ENCODE measurements at regions of chr11 and their contacts with region 1.

Region 1: GRCh38 chr11:118928108-118928870 is 2.6 kb upstream of the BCL9L start:
- DNase-seq: peak; percentile 98
- ATAC-seq: peak; percentile 67 to 71
- H3K4me3 ChIP-seq: peak overlapping the region; percentile 60 to 100 (median 82)
- H3K27ac ChIP-seq: peak overlapping the region; percentile 89 to 100 (median 96)
- H3K4me1 ChIP-seq: peaks cover 34 to 55% of the 10 kb centered on the region in 2 donors
- H3K27me3 ChIP-seq: no peaks in the 10 kb centered on the region
- CTCF ChIP-seq: peak; percentile 95 to 98 (median 97)
- POLR2A ChIP-seq: peak; percentile 60 to 73

Region 2: GRCh38 chr11:118448294-118448693 is 480.0 kb before region 1 on chr11:
- in situ Hi-C with region 1: no loop called
- intact Hi-C with region 1: no loop called
- DNase-seq: no peak
- ATAC-seq: no peak
- H3K4me3 ChIP-seq: no peak overlapping the region
- H3K27ac ChIP-seq: no peak overlapping the region
- H3K4me1 ChIP-seq: peaks cover 26 to 29% of the 10 kb centered on the region in 2 donors
- H3K27me3 ChIP-seq: no peaks in the 10 kb centered on the region
- CTCF ChIP-seq: no peak
- POLR2A ChIP-seq: no peak

Region 3: GRCh38 chr11:118476676-118477075 is 451.6 kb before region 1 on chr11:
- in situ Hi-C with region 1: no loop called
- intact Hi-C with region 1: no loop called
- DNase-seq: no peak
- ATAC-seq: no peak
- H3K4me3 ChIP-seq: no peak overlapping the region
- H3K27ac ChIP-seq: no peak overlapping the region
- H3K4me1 ChIP-seq: no peaks in the 10 kb centered on the region
- H3K27me3 ChIP-seq: no peaks in the 10 kb centered on the region
- CTCF ChIP-seq: no peak
- POLR2A ChIP-seq: no peak

Region 4: DNA sequence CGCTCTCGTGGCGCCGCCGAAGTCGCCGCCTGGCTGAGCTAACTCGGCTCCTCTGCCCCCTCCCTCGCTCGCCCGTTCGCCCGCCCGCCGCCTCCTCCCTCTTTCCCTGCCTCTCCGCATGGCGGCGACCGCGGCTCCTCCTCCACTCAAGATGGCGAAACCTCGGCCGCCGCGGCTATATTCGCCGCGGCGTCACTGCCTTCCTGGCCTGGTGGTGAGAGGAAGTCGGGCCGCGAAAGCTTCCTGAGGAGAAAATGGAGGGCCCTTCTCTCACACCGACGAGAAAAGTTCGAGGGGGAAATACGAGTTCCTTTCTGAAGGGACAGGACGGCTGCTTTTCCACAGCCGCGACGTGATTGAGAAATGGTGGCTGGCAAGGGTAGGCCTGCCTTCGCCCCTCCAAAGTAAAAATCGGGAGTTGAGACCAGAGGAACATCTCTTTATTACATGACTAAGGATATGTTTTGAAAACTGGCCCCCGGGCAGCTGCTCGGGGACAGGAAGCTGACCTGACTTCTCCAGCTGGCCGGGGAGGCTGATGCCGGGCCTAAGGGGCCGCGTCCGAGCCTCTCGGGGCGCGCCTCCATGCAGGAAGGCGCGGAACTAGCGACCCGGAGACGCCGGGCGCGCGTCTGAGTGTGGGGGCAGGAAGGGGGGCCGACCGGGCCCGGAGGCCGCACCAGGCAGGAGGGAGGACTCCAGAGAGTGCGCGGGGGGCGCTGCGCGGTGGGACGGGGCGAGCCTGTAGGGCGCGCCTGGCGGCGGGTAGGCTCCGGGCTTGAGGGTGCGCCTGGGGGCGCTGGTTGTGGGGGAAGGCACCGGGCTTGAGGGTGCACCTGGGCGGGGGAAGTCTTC is 137.0 kb before region 1 on chr11 and contains the start of gene DDX6:
- in situ Hi-C with region 1: loop called in 2 of 4 experiments (anchors 10 to 25 kb)
- intact Hi-C with region 1: loop called (anchors 1 kb)
- DNase-seq: peak; percentile 86 to 89
- ATAC-seq: peak; percentile 78 to 86
- H3K4me3 ChIP-seq: peak within 1 kb of the TSS; percentile 80 to 96 (median 86)
- H3K27ac ChIP-seq: peak within 1 kb of the TSS; percentile 93 to 100 (median 98)
- H3K4me1 ChIP-seq: peaks cover 27% of the 10 kb centered on the region in 2 donors
- H3K27me3 ChIP-seq: no peaks in the 10 kb centered on the region
- CTCF ChIP-seq: peak; percentile 15 to 57 (median 37)
- POLR2A ChIP-seq: peak; percentile 82 to 90
- total RNA-seq, gene DDX6: 73.4 to 125 (median 98.2) TPM

Region 5: DNA sequence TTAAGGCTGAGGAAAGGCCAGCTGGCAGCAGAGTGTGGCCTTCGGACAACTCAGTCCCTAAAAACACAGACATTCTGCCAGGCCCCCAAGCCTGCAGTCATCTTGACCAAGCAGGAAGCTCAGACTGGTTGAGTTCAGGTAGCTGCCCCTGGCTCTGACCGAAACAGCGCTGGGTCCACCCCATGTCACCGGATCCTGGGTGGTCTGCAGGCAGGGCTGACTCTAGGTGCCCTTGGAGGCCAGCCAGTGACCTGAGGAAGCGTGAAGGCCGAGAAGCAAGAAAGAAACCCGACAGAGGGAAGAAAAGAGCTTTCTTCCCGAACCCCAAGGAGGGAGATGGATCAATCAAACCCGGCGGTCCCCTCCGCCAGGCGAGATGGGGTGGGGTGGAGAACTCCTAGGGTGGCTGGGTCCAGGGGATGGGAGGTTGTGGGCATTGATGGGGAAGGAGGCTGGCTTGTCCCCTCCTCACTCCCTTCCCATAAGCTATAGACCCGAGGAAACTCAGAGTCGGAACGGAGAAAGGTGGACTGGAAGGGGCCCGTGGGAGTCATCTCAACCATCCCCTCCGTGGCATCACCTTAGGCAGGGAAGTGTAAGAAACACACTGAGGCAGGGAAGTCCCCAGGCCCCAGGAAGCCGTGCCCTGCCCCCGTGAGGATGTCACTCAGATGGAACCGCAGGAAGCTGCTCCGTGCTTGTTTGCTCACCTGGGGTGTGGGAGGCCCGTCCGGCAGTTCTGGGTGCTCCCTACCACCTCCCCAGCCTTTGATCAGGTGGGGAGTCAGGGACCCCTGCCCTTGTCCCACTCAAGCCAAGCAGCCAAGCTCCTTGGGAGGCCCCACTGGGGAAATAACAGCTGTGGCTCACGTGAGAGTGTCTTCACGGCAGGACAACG is 32.9 kb before region 1 on chr11:
- in situ Hi-C with region 1: no loop called
- intact Hi-C with region 1: loop called (anchors 5 kb)
- DNase-seq: no peak
- ATAC-seq: no peak
- H3K4me3 ChIP-seq: no peak overlapping the region
- H3K27ac ChIP-seq: no peak overlapping the region
- H3K4me1 ChIP-seq: peaks cover 0 to 4% of the 10 kb centered on the region in 2 donors
- H3K27me3 ChIP-seq: no peaks in the 10 kb centered on the region
- CTCF ChIP-seq: no peak
- POLR2A ChIP-seq: no peak

Region 6: DNA sequence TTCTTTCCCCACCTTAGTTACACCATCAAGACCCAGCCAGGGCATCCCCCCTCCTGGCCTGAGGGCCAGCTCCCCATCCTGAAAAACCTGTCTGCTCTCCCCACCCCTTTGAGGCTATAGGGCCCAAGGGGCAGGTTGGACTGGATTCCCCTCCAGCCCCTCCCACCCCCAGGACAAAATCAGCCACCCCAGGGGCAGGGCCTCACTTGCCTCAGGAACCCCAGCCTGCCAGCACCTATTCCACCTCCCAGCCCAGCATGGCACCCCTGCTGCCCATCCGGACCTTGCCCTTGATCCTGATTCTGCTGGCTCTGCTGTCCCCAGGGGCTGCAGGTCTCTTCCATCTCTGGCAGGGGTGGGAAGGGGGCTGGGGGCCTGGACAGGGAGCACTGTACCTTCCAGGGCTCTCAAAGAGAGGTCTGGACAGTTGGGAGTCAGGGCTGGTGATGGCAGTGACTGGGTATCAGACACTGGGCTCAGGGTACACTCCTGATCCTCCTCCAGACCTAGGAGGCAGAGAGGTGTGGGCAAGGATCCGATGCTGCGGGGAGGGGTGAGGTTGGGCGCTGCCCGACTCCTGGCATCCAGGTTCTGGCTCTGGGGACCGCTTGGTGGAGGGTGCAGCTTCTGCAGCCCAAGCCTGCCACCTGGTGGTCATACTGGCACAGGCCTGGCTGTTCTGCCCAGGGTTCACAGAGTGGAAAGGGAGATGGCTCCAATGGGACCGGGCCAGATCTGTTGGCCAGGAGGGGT is 28.0 kb after region 1 on chr11 and contains the start of gene UPK2:
- in situ Hi-C with region 1: no loop called
- intact Hi-C with region 1: loop called (anchors 1 kb)
- DNase-seq: peak; percentile 74 to 82
- ATAC-seq: peak; percentile 95 to 97
- H3K4me3 ChIP-seq: no peak within 1 kb of the TSS
- H3K27ac ChIP-seq: no peak within 1 kb of the TSS
- H3K4me1 ChIP-seq: no peaks in the 10 kb centered on the region
- H3K27me3 ChIP-seq: no peaks in the 10 kb centered on the region
- CTCF ChIP-seq: peak; percentile 94 to 97 (median 96)
- POLR2A ChIP-seq: no peak
- total RNA-seq, gene UPK2: not detected

Region 7: DNA sequence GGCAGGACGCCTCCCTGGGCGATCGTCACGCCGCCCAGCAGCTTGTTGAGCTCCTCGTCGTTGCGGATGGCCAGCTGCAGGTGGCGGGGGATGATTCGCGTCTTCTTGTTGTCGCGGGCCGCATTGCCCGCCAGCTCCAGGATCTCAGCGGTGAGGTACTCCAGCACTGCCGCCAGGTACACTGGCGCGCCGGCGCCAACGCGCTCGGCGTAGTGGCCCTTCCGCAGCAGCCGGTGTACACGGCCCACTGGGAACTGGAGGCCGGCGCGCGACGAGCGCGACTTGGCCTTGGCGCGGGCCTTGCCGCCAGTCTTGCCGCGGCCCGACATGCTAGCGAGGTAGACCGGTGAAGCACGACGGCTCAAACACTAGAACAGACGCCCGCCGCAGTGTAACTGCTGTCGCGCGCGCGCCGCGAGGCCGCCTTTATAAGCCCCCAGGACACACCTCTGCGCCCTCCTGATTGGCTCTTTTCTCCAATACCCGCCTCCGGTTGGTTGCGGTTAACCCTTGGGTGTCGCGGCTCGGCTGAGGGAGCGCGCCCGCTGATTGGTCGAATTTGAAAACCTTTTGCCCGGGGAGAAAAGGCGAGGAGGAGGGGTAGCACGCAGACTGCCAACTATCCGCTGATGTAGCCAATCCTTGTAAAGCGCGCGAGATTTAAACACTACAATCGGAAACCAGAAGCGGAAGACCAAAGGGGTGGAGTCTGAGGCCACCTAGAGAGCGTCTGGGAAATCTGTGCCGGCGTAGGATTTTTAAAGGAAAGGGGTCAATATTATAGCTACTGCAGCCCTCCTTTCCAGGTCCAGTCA is 167.0 kb after region 1 on chr11:
- in situ Hi-C with region 1: no loop called
- intact Hi-C with region 1: loop called (anchors 2 kb)
- DNase-seq: peak; percentile 99 to 100
- ATAC-seq: peak; percentile 94
- H3K4me3 ChIP-seq: peak overlapping the region; percentile 69 to 99 (median 88)
- H3K27ac ChIP-seq: peak overlapping the region; percentile 91 to 98 (median 94)
- H3K4me1 ChIP-seq: peaks cover 17 to 24% of the 10 kb centered on the region in 2 donors
- H3K27me3 ChIP-seq: no peaks in the 10 kb centered on the region
- CTCF ChIP-seq: peak in 4 of 5 experiments; percentile 18 to 70 (median 35)
- POLR2A ChIP-seq: peak; percentile 99 to 100